ENCODE measurements at regions of chr14 and their contacts with region 1.

Region 1: DNA sequence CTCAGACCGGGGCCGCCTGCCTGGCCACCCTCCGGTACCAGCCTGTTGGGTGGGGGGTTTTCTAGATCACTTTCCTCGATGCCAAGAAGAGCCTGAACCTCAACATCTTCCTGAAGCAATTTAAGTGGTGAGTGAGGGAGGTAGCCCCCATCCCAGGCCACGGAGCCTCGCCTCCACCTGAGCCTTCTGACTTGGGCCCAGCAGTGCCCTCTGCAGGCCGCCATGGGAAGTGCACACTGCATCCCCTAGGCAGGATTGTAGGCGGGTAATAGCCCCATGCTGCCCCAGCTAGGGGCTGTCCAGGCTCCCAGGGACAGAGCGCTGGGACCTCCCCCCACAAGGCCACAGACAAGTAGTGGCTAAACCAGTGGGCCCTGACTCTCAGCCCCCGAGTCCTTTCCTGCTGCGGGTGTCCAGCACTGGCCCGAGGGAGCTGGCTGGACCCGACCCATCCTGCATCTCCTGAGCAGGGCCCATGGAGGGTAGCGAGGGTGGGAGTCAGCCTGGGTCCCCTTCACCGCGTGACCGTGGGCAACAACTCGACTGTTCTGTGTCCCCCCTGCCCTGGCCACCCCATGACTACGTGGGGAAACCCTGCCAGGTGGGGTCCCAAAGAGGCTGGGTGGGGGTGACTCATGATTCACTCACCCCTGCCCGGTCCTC is 15.3 kb upstream of the ADSS1 start:
- DNase-seq: peak; percentile 76
- H3K4me3 ChIP-seq: no peak overlapping the region
- H3K27ac ChIP-seq: no peak overlapping the region
- H3K4me1 ChIP-seq: no peaks in the 10 kb centered on the region
- H3K27me3 ChIP-seq: no peaks in the 10 kb centered on the region
- CTCF ChIP-seq: peak; percentile 99

Region 2: GRCh38 chr14:104283197-104284106 is 425.3 kb before region 1 on chr14:
- intact Hi-C with region 1: no loop called
- DNase-seq: peak; percentile 84
- H3K4me3 ChIP-seq: no peak overlapping the region
- H3K27ac ChIP-seq: peak overlapping the region; percentile 78
- H3K4me1 ChIP-seq: peaks cover 19% of the 10 kb centered on the region
- H3K27me3 ChIP-seq: no peaks in the 10 kb centered on the region
- CTCF ChIP-seq: no peak

Region 3: GRCh38 chr14:104650057-104650981 is 58.4 kb before region 1 on chr14:
- intact Hi-C with region 1: loop called (anchors 2 kb)
- DNase-seq: peak; percentile 72
- H3K4me3 ChIP-seq: peak overlapping the region; percentile 36
- H3K27ac ChIP-seq: no peak overlapping the region
- H3K4me1 ChIP-seq: peaks cover 3% of the 10 kb centered on the region
- H3K27me3 ChIP-seq: no peaks in the 10 kb centered on the region
- CTCF ChIP-seq: peak; percentile 94

Region 4: DNA sequence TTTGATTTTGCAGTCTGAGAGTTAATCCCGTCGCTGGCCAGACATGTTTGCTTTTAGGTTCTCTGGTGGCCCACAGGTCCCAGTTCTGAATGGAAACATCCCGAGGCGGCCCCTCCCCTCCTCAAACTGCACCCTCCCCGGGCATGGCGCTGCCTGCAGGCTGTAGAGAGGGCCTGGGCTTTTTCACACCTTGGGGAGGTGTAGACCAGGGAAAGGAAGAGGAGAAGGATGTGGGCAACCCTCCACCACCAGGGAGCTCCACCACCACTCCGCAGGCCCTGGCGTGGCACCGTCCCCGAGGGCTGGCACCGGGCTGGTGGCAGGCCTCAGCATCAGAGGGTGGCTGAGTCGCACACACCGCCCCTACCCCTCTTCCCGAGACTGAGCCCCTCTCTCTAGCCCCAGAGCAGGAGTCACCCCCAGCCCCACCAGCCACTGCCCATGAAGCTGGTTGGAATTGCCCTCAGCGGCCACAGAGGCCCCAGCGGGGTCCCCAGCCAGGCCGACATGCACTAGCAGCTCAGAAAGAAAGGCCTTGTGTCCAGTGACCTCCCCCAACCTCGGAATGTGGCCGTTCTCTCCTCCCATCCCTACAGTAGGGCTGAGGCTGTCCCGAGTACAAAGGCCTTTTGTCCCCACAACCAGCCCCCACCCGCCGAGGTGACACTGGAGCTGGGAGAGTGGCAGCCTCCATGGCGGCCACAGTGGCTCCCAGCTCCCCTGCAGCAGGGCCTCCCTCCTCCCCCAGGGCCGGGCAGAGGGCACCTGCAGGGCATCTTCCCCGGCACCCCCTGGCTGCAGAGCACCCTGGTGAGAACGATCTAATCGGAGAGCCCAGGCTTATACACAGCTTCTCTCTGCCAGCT is 42.8 kb before region 1 on chr14:
- intact Hi-C with region 1: loop called (anchors 1 kb)
- DNase-seq: peak; percentile 64
- H3K4me3 ChIP-seq: no peak overlapping the region
- H3K27ac ChIP-seq: no peak overlapping the region
- H3K4me1 ChIP-seq: peaks cover 6% of the 10 kb centered on the region
- H3K27me3 ChIP-seq: no peaks in the 10 kb centered on the region
- CTCF ChIP-seq: peak; percentile 46

Region 5: DNA sequence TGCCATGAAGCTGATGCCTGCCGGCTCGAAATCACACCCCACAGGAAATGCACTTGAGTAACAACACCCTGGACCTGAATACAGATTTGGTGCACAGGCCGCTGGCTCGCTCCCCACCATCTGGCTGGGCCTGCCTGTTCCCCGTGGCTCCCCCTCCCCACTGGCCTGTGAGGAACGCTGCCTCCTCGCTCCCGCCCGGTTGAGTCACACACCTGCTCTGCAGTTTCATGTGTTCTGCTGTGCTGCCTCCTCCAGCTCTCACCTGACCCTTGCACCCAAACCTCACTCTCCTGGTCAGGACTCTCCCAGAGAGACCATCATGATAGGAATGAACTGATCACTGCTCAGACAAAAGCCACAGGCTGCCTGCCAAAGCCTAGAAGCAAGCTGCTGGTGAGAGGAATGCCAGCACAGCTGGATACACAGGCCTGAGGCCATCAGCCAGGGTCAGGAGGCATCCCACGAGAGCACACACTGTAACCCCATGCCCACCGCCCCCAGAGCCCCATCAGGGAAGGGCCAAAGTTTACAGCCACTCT is 40.4 kb after region 1 on chr14:
- intact Hi-C with region 1: no loop called
- DNase-seq: peak; percentile 77
- H3K4me3 ChIP-seq: no peak overlapping the region
- H3K27ac ChIP-seq: no peak overlapping the region
- H3K4me1 ChIP-seq: peaks cover 21% of the 10 kb centered on the region
- H3K27me3 ChIP-seq: no peaks in the 10 kb centered on the region
- CTCF ChIP-seq: no peak

Region 6: GRCh38 chr14:104820669-104821228 is 112.0 kb after region 1 on chr14:
- intact Hi-C with region 1: no loop called
- DNase-seq: peak; percentile 64
- H3K4me3 ChIP-seq: no peak overlapping the region
- H3K27ac ChIP-seq: no peak overlapping the region
- H3K4me1 ChIP-seq: peaks cover 6% of the 10 kb centered on the region
- H3K27me3 ChIP-seq: no peaks in the 10 kb centered on the region
- CTCF ChIP-seq: peak; percentile 12